OCI-LY7 (cell line): ENCODE measurements at regions of chr2 and their contacts with region 1.

Region 1: GRCh38 chr2:105521205-105521604 is 122.4 kb upstream of the FHL2 start:
- DNase-seq: no peak
- H3K4me3 ChIP-seq: no peak overlapping the region
- H3K27ac ChIP-seq: no peak overlapping the region
- H3K4me1 ChIP-seq: no peaks in the 10 kb centered on the region
- CTCF ChIP-seq: peak; percentile 82

Region 2: GRCh38 chr2:105344704-105345345 is 176.4 kb before region 1 on chr2:
- CTCF ChIA-PET with region 1: no interaction called
- POLR2A ChIA-PET with region 1: no interaction called
- intact Hi-C with region 1: loop called (anchors 10 kb)
- DNase-seq: peak; percentile 50
- H3K4me3 ChIP-seq: no peak overlapping the region
- H3K27ac ChIP-seq: no peak overlapping the region
- H3K4me1 ChIP-seq: no peaks in the 10 kb centered on the region
- CTCF ChIP-seq: peak; percentile 77

Region 3: DNA sequence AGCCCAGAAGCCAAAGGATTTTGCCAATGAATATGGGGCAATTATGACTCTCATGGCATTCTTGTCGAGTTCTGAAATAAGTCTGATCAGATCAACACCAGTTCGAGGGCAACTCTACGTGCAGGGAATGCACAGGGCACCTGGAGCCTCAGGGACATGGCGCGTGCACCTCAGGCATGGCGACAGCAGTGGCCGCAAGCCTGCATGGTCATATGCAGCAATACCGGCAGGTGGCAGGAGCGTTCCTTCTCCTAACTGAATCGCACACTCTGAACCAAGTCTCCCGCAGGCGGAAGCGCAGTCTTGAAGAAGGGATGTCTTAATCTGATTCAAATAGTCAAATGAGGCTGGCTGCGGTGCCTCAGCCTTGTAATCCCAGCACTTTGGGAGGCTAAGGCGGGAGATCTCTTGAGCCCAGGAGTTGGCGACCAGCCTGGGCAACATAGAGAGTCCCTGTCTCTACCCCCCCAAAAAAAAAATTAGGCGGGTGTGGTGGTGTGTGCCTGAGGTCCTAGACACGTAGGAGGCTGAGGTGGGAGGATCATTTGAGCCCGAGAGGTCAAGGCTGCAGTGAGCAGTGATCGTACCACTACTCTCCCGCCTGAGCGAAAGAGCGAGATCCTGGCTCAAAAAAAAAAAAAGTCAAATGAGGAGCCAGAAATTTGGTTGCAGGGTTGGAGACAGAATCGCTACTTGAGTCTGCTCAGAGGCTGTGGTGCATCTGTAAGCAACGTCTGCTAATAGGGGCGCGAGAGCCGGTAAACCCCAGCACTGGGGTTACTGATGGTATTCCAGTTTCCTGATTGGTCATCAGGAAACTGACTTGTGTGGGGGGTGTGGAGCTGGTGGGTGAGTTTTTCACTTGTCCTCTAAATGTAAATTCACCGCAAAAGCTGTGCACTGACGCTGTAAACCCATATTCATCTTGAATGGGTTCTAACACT is 151.2 kb before region 1 on chr2:
- CTCF ChIA-PET with region 1: interaction called, 3 read pairs
- POLR2A ChIA-PET with region 1: no interaction called
- intact Hi-C with region 1: loop called (anchors 1 kb)
- DNase-seq: peak; percentile 58
- H3K4me3 ChIP-seq: no peak overlapping the region
- H3K27ac ChIP-seq: no peak overlapping the region
- H3K4me1 ChIP-seq: no peaks in the 10 kb centered on the region
- CTCF ChIP-seq: peak; percentile 70